IMR-90 (cell line): ENCODE measurements at regions of chr17 and their contacts with region 1.

Region 1: GRCh38 chr17:36534840-36535668 is at the starts of genes MYO19 and PIGW:
- DNase-seq: peak; percentile 85
- ATAC-seq: peak; percentile 91
- H3K4me3 ChIP-seq: peak within 1 kb of the TSS; percentile 84
- H3K27ac ChIP-seq: peak within 1 kb of the TSS; percentile 93
- H3K4me1 ChIP-seq: peaks cover 5% of the 10 kb centered on the region
- H3K27me3 ChIP-seq: no peaks in the 10 kb centered on the region
- CTCF ChIP-seq: no peak
- POLR2A ChIP-seq: peak; percentile 89
- RAD21 ChIP-seq: no peak
- total RNA-seq, gene MYO19: 32.5 and 35.8 TPM in 2 replicates
- total RNA-seq, gene PIGW: 4.5 and 6.1 TPM in 2 replicates

Region 2: DNA sequence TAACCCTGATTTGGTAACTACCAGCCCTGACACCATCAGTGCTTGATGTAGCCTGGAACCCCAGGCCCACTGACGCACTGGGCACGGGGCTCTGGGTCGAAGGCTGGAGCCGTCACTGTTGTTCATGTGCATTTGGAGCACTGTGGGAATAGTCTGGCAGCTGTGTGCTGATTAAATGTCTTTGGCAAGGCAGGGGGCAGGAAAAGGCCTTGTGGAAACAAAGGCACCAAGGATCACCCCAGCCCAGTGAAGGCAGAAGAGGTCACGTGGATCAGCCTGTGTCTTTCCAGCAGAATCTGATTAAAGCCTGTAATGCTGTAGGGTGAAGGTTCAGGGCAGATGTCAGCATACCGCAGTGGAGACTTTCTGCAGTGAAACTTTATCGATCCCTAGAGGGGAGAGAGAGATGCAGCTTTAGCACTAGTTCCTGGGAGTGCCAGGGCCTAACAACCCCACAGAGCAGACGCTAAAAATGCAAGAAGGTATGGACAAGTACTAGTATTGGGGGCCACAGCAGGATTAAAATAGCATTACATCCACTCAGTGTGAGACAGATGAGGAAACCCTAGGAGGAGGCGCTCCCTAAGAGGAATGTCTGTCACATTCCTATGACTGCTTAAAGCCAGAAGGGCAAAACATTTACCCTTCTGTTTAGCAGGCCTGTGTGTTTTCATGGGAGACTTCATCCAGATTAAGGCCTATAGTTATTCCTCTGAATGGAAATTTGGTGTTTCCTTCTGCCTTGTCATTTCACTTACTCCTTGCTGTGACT is 38.9 kb before region 1 on chr17:
- CTCF ChIA-PET with region 1: no interaction called
- POLR2A ChIA-PET with region 1: no interaction called
- dilution Hi-C with region 1: no loop called
- in situ Hi-C with region 1: no loop called
- intact Hi-C with region 1: loop called (anchors 2 kb)
- DNase-seq: peak; percentile 16
- ATAC-seq: peak; percentile 74
- H3K4me3 ChIP-seq: no peak overlapping the region
- H3K27ac ChIP-seq: no peak overlapping the region
- H3K4me1 ChIP-seq: no peaks in the 10 kb centered on the region
- H3K27me3 ChIP-seq: no peaks in the 10 kb centered on the region
- CTCF ChIP-seq: no peak
- POLR2A ChIP-seq: no peak
- RAD21 ChIP-seq: no peak

Region 3: DNA sequence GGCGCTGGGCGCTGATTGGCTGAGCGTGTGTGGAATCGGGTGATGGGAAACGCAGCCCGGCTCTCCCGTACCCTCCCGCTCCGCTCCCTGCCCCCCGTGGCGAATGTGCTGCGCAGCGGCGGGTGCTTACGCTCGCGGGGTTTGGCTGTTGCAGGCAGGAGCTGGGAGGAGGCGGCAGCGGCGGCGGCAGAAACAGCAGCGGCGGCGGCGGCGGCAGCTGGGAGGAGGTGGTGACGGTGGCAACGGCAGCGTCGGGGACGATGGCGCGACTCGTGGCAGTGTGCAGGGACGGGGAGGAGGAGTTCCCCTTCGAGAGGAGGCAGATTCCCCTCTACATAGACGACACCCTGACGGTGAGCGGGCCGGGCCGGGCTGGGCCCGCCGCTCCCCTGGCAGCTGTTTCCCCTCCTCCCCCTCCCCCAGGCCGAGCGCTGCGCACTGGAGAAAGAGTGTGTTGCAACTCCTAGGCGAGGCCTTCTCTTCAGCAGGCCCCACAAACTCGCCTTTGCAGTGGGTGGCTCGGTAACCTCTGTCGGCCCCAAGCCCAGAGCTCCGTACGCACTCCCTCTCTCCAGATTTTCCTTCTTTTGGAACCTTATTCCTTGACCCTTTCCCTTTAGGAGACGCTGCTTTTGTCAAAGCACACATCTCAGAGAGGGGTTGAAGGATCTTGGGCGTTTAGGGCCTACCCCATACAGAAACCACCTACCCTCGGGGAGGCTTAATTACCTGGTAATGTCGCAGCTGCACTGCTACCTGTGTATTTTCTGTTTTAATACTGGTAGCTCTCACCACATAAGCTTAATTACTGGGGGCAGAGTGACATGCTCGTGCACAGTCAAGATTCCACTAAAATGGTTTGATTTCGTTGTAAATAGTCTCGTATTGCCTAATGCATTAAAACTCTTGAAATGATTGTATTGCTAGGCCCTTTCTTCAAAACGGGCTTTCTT is 10.7 kb after region 1 on chr17:
- CTCF ChIA-PET with region 1: no interaction called
- POLR2A ChIA-PET with region 1: no interaction called
- dilution Hi-C with region 1: no loop called
- in situ Hi-C with region 1: no loop called
- intact Hi-C with region 1: loop called (anchors 1 kb)
- DNase-seq: peak; percentile 98
- ATAC-seq: peak; percentile 84
- H3K4me3 ChIP-seq: peak overlapping the region; percentile 86
- H3K27ac ChIP-seq: peak overlapping the region; percentile 96
- H3K4me1 ChIP-seq: no peaks in the 10 kb centered on the region; the same call in 1 of the 2 replicates
- H3K27me3 ChIP-seq: no peaks in the 10 kb centered on the region
- CTCF ChIP-seq: no peak
- POLR2A ChIP-seq: no peak
- RAD21 ChIP-seq: no peak

Region 4: DNA sequence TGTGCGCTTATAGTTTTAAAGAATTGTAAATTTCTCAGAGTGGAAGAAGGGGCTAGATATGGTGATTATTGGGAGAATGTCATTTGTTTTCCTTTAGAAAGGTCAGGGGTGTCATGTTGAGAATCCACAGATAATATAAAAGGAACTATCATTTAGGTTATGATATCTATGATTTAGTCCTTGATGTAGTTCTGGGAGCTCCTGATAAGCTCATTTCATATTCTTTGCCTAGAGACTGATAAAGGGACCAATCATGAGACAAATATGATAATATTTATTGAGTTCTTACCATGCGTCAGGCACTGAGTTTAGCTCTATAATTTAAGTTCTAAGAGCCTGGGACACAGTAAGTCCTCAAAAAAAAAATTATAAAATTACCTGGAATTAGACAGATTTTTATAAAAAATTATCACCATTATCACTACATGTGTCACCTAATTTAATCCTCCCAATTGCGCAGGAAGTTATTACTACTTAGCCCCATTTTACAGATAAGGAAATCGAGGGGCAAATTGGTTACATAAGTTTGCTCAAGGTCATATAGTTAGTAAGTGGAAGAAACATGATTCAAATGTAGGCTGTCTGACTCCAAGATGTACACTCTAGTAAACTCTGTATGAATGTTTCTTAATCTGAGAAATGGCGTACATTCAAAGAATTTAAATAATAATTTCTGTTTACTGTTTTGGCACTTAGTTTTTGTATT is 416.2 kb after region 1 on chr17:
- CTCF ChIA-PET with region 1: no interaction called
- POLR2A ChIA-PET with region 1: no interaction called
- dilution Hi-C with region 1: no loop called
- in situ Hi-C with region 1: no loop called
- intact Hi-C with region 1: no loop called
- DNase-seq: no peak
- ATAC-seq: no peak
- H3K4me3 ChIP-seq: no peak overlapping the region
- H3K27ac ChIP-seq: no peak overlapping the region
- H3K4me1 ChIP-seq: peaks cover 3% of the 10 kb centered on the region
- H3K27me3 ChIP-seq: peaks cover 18% of the 10 kb centered on the region
- CTCF ChIP-seq: no peak
- POLR2A ChIP-seq: no peak
- RAD21 ChIP-seq: no peak